HAP-1 (cell line): ENCODE measurements at regions of chr16 and their contacts with region 1.

Region 1: GRCh38 chr16:83826146-83826913 is 18.6 kb downstream of the HSBP1 start:
- DNase-seq: peak; percentile 77 to 92
- H3K4me3 ChIP-seq: no peak overlapping the region
- H3K4me1 ChIP-seq: peaks cover 9% of the 10 kb centered on the region
- H3K27me3 ChIP-seq: no peaks in the 10 kb centered on the region

Region 2: DNA sequence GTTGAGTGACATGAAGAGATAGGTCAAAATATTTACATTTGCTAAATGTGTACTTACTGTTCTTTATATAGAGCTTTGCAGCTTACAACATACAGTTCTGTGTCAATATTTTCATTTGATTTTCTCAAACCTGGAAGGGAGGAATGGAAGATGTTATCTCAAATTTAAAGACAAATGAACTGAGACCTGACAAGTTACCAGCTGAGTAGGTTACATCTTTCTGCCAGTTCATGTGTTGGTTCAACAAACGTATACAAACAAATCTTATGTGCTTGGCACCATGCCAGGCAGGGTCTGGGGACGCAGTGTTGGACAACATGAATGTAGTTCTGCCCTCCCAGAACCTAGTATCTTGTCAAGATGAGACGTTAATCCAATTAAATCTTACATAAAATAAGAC is 526.0 kb before region 1 on chr16:
- in situ Hi-C with region 1: no loop called
- DNase-seq: no peak
- H3K4me3 ChIP-seq: no peak overlapping the region
- H3K4me1 ChIP-seq: no peaks in the 10 kb centered on the region
- H3K27me3 ChIP-seq: no peaks in the 10 kb centered on the region

Region 3: DNA sequence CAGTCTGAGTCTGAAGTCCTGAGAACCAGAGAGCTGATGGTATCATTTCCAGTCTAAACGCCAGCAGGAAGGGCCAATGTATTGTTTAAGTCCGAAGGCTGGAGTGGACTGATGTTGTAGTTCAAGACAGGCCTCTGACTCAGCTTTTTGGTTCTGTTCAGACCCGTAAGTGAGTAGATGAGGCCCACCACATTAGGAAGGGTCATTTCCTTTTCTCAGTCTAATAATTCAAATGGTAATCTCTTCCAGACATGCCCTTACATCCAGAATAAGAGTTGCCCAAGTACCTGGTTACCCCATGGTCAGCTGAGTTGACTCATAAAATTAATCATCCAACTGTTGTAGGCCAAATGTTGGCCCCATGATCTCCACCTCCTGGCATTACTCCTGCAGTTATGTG is 461.2 kb before region 1 on chr16:
- in situ Hi-C with region 1: no loop called
- DNase-seq: no peak
- H3K4me3 ChIP-seq: no peak overlapping the region
- H3K4me1 ChIP-seq: no peaks in the 10 kb centered on the region
- H3K27me3 ChIP-seq: no peaks in the 10 kb centered on the region

Region 4: GRCh38 chr16:83701494-83701893 is 124.8 kb before region 1 on chr16:
- in situ Hi-C with region 1: no loop called
- DNase-seq: peak in 1 of 2 experiments; percentile 76
- H3K4me3 ChIP-seq: no peak overlapping the region
- H3K4me1 ChIP-seq: no peaks in the 10 kb centered on the region
- H3K27me3 ChIP-seq: 0 out of 2 replicates have a peak, but pooled peaks cover 2% of the 10 kb centered on the region

Region 5: DNA sequence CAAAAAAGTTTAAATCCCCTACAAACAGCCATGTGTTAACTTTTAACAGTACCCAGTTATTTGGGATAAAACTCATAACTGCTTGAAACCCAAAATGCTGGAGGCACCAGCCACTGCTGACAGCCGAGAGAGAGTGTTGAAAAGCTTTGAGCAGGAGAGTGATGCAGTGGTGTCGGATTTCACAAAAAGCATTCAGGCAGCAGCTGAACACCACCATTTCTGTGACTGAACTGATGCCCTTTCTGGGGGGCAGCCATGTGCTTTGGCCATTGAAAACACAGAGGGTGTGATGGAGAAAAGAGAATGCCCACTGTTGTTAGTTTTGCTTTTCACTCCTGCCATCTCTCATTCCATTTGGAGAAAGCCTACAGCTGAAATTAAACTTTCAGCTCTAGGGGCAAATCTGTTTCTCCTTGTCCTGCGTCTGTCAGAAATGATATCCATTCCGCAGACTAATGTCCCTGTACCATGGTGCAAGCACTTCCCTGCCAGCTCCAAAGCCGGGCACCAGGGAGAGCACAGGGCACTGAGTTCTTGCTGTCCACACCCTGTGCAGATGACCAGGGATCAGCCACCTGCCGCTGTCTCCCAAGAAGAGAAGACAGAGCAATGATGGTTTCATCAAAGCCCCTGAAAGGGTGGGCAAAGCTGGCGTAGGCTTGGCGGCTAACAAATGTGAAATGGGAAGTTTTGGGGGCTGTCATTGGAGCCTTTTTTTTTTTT is 56.0 kb after region 1 on chr16:
- in situ Hi-C with region 1: loop called (anchors 5 kb)
- DNase-seq: peak in 1 of 2 experiments; percentile 29
- H3K4me3 ChIP-seq: no peak overlapping the region
- H3K4me1 ChIP-seq: peaks cover 4% of the 10 kb centered on the region; the same call in 1 of the 2 replicates
- H3K27me3 ChIP-seq: no peaks in the 10 kb centered on the region

Region 6: GRCh38 chr16:84055366-84055765 is 229.0 kb after region 1 on chr16:
- in situ Hi-C with region 1: loop called (anchors 10 kb)
- DNase-seq: no peak
- H3K4me3 ChIP-seq: no peak overlapping the region
- H3K4me1 ChIP-seq: no peaks in the 10 kb centered on the region
- H3K27me3 ChIP-seq: no peaks in the 10 kb centered on the region